ENCODE measurements at regions of chr1 and their contacts with region 1.

Region 1: DNA sequence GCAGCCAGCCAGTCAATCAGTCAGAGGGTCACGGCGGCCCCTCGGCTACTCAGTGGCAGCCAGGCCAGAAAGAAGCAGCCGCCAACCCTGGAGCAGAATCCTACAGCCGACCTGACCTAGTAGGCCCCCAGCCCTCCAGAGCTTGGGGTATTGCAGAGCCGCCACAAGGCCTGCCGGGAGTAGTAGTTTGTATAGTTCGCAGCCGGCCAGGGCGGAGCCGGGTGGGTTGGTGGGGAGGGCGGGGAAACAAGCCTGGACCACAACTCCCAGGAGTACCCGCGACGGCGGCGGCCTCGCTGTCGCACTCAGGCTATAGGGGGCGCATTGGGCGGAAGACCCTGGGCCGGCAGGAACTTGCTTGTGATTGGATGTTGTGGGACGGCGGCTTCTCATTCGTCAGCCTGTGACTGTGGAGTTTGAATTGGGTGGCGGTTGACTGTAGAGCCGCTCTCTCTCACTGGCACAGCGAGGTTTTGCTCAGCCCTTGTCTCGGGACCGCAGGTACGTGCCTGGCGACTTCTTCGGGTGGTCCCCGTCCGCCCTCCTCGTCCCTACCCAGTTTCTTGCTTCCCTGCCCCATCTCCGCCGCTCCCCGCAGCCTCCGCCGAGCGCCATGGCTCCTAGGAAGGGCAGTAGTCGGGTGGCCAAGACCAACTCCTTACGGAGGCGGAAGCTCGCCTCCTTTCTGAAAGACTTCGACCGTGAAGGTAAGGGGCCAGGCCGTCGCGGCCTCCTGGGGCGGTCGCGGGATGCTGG is at the start of gene CDCA8:
- DNase-seq: peak; percentile 99
- H3K4me3 Mint-ChIP-seq: peak within 1 kb of the TSS; percentile 97
- H3K27ac Mint-ChIP-seq: peak within 1 kb of the TSS; percentile 87
- H3K4me1 Mint-ChIP-seq: peaks cover 35% of the 10 kb centered on the region
- H3K27me3 Mint-ChIP-seq: no peaks in the 10 kb centered on the region
- total RNA-seq, gene CDCA8: 73.6 to 78.6 TPM

Region 2: GRCh38 chr1:36463803-36464604 is 1228.3 kb before region 1 on chr1 and contains the start of gene MRPS15:
- CTCF ChIA-PET with region 1: no interaction called
- intact Hi-C with region 1: loop called (anchors 5 kb)
- DNase-seq: peak; percentile 98
- H3K4me3 Mint-ChIP-seq: peak within 1 kb of the TSS; percentile 99
- H3K27ac Mint-ChIP-seq: peak within 1 kb of the TSS; percentile 97
- H3K4me1 Mint-ChIP-seq: peaks cover 28% of the 10 kb centered on the region
- H3K27me3 Mint-ChIP-seq: no peaks in the 10 kb centered on the region
- total RNA-seq, gene MRPS15: 122 to 141 TPM

Region 3: GRCh38 chr1:37595440-37596319 is 96.6 kb before region 1 on chr1 and contains the start of gene GNL2:
- CTCF ChIA-PET with region 1: no interaction called
- intact Hi-C with region 1: loop called (anchors 1 kb)
- DNase-seq: peak; percentile 97
- H3K4me3 Mint-ChIP-seq: peak within 1 kb of the TSS; percentile 99
- H3K27ac Mint-ChIP-seq: peak within 1 kb of the TSS; percentile 90
- H3K4me1 Mint-ChIP-seq: peaks cover 34% of the 10 kb centered on the region
- H3K27me3 Mint-ChIP-seq: no peaks in the 10 kb centered on the region
- total RNA-seq, gene GNL2: 62.2 to 65.3 TPM

Region 4: DNA sequence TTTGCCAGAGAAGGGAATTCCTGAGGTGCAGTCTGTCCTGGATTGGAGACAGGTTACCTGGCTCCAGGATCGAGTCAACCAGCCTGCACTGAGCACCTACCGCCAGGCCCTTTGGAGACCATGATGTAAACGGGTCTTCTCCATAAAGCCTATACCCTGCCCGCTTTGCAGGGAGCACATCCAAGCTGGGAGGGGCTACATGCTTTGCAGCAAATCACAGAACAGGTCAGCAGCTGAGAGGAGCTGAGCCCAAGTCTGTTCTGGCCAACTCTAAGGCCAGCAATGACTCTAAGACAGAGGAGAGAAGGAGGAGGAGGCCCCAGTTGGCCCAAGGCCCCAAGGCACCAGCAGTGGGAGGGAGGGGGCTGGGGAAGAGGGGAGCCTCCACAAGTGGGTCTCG is 42.1 kb before region 1 on chr1:
- CTCF ChIA-PET with region 1: no interaction called
- intact Hi-C with region 1: no loop called
- DNase-seq: no peak
- H3K4me3 Mint-ChIP-seq: no peak overlapping the region
- H3K27ac Mint-ChIP-seq: no peak overlapping the region
- H3K4me1 Mint-ChIP-seq: no peaks in the 10 kb centered on the region
- H3K27me3 Mint-ChIP-seq: peaks cover 4% of the 10 kb centered on the region

Region 5: DNA sequence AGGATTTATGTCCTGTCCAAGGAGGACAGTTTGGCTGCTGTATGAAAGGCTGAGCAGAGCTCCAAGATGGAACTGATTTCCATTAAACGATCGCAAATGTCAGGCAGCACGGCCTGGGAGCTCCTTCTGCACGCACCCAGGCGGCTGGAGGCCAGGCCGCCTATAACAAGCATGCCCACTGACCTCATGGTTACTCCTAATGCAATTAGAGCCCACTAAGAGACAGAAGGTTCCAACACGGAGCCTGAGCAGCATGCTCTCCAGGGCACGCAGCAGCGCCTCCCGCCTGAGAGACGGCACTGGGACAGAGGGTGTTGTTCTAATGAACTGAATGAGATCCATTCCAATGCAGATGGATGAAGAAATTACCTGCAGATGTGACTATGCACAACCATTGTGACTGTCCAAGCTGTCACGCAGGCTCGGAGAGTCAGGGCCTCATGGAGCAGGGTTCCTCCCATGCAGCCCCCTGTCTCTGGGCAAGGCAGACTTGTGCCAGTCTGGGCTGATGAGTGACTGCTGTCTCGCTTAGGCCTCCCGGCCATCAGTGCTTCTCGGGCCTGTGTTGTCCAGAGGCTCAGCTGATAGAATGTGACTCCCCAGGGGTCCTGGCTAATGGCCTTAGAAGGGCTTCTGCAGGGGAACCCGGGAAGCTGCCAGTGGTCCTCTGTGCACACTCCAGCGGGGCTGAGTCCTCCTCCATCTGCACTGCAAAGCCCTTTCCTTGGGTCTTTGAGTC is 25.1 kb before region 1 on chr1:
- CTCF ChIA-PET with region 1: no interaction called
- intact Hi-C with region 1: no loop called
- DNase-seq: no peak
- H3K4me3 Mint-ChIP-seq: no peak overlapping the region
- H3K27ac Mint-ChIP-seq: no peak overlapping the region
- H3K4me1 Mint-ChIP-seq: peaks cover 3% of the 10 kb centered on the region
- H3K27me3 Mint-ChIP-seq: no peaks in the 10 kb centered on the region

Region 6: DNA sequence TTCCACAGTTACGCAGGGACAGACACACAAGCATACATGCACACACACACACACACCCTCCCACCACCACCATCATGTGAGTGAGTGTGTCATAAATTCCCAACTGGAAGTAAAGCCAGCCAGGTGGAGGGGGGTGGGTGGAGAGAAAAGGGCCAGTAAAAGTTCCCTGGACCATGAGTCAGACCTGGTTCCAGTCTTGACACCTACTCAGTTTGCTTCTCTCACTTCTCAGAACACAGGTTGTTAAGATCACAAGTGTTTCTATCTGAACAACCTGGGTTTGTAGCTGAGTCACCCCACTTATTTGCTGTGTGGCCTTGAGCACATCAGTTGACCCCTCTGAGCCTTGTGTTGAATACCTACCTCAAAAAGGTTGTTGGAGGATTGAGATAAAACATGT is 63.0 kb after region 1 on chr1:
- CTCF ChIA-PET with region 1: no interaction called
- intact Hi-C with region 1: loop called (anchors 2 kb)
- DNase-seq: peak; percentile 65
- H3K4me3 Mint-ChIP-seq: no peak overlapping the region
- H3K27ac Mint-ChIP-seq: no peak overlapping the region
- H3K4me1 Mint-ChIP-seq: peaks cover 19% of the 10 kb centered on the region
- H3K27me3 Mint-ChIP-seq: peaks cover 30% of the 10 kb centered on the region

Region 7: GRCh38 chr1:37859507-37860345 is 167.5 kb after region 1 on chr1 and contains the start of gene MTF1:
- CTCF ChIA-PET with region 1: interaction called, 3 read pairs
- intact Hi-C with region 1: loop called (anchors 1 kb)
- DNase-seq: peak; percentile 98
- H3K4me3 Mint-ChIP-seq: peak within 1 kb of the TSS; percentile 92
- H3K27ac Mint-ChIP-seq: peak within 1 kb of the TSS; percentile 84
- H3K4me1 Mint-ChIP-seq: peaks cover 39% of the 10 kb centered on the region
- H3K27me3 Mint-ChIP-seq: no peaks in the 10 kb centered on the region
- total RNA-seq, gene MTF1: 18.9 to 19.1 TPM

Region 8: GRCh38 chr1:38012363-38013226 is 320.3 kb after region 1 on chr1 and contains the start of gene UTP11:
- CTCF ChIA-PET with region 1: no interaction called
- intact Hi-C with region 1: loop called (anchors 1 kb)
- DNase-seq: peak; percentile 96
- H3K4me3 Mint-ChIP-seq: peak within 1 kb of the TSS; percentile 98
- H3K27ac Mint-ChIP-seq: peak within 1 kb of the TSS; percentile 95
- H3K4me1 Mint-ChIP-seq: peaks cover 55% of the 10 kb centered on the region
- H3K27me3 Mint-ChIP-seq: no peaks in the 10 kb centered on the region
- total RNA-seq, gene UTP11: 49.7 to 49.8 TPM

Measured in activated naive CD4-positive, alpha-beta T cell treated with anti-CD3 and anti-CD28 coated beads for 36 hours (primary cell).